Spleen (tissue), 13 donors: ENCODE measurements at regions of chr11 and their contacts with region 1.

Region 1: GRCh38 chr11:65506770-65507505 is 8.1 kb downstream of the MALAT1 start:
- DNase-seq: no peak
- H3K4me3 ChIP-seq: peak overlapping the region in 6 of 8 donors; percentile 13 to 92 (median 76)
- H3K27ac ChIP-seq: peak overlapping the region; percentile 63 to 100 (median 98)
- H3K4me1 ChIP-seq: peaks cover 40 to 92% (median 58%) of the 10 kb centered on the region in 6 donors
- H3K27me3 ChIP-seq: no peaks in the 10 kb centered on the region
- CTCF ChIP-seq: no peak
- POLR2A ChIP-seq: peak in 2 of 3 donors; percentile 0 to 66

Region 2: GRCh38 chr11:65373839-65374580 is 132.9 kb before region 1 on chr11:
- intact Hi-C with region 1: loop called (anchors 5 kb)
- DNase-seq: no peak
- H3K4me3 ChIP-seq: no peak overlapping the region
- H3K27ac ChIP-seq: no peak overlapping the region
- H3K4me1 ChIP-seq: peaks cover 0 to 23% (median 16%) of the 10 kb centered on the region in 6 donors
- H3K27me3 ChIP-seq: no peaks in the 10 kb centered on the region
- CTCF ChIP-seq: no peak
- POLR2A ChIP-seq: no peak

Region 3: DNA sequence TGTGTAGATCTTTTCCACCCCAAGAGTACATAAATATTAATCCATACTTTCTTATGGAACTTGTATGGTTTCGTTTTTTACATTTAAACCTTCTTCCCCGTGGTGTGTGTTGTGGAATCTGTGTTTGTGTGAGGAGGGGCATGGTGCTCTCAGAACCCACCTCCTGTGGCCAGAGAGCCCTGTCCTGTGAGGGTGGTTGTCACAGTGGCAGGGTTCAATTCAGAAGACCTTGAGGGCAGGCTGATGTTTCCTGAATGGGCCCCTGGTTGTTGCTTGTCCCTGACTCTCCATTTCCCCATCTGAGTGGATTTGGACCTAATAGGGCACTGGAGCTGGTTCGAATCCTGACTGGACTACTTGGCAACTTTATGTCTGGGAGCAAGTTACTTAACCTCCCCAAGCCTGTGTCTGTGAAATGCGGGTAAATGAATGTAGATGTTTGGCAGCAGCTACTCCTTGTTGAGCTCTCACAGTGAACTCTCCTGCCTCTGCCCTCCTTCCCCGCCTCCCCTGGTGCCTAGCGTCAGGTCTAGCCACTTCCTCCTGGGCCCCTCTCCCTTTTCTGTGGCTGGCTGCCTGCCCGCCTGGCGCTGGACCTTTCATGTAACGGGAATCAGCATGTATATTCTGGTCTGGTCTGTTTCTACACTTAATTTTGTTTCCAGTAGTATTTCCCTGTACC is 77.1 kb before region 1 on chr11:
- intact Hi-C with region 1: loop called (anchors 5 kb)
- DNase-seq: peak; percentile 91
- H3K4me3 ChIP-seq: peak overlapping the region; percentile 0 to 96 (median 82)
- H3K27ac ChIP-seq: peak overlapping the region; percentile 92 to 100 (median 98)
- H3K4me1 ChIP-seq: peaks cover 64 to 94% (median 86%) of the 10 kb centered on the region in 6 donors
- H3K27me3 ChIP-seq: no peaks in the 10 kb centered on the region
- CTCF ChIP-seq: no peak
- POLR2A ChIP-seq: peak; percentile 3 to 57 (median 40)

Region 4: DNA sequence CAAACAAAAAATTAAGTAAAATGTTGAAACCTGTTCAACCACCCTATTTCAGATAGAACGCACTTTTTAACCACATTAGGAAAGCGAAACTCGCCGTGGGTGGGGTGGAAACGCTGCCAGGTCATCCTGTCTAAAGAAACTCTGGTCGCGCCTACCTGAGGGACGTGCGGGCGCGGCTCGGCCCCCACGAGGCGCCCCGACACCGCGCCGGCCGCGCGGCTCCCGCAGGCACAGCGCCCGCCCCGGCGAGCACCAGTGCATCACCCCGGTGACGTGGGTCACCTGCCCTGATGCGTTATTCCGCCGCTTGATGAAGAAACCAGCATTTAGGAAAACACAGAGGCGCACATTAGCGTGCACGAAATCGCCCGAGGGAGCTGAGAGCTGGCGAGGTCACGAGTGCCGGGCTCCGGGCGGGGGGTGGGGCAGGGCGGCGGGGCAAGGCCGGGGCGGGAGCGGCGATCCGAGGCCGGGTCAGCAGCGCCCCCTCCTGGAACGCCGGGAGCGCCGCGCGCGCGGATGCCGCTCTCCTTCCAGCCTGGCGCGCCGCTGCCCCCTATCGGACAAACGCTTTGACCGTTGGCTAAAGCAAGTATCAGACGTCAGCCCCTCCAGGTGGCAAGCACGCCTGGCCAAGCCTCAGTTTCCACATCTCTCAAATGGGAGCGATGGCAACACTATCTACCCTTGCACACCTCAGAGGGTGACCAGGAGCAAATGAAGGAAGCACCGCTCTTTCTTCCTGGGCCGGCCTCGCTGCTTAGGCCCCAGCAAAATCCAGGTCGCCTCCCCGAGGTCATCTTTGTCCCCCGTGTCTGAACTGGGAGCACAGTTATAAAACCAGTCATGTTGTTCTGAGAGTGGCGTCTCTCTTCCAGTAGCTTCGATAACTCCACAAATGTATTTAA is 311.2 kb after region 1 on chr11:
- intact Hi-C with region 1: no loop called
- DNase-seq: peak; percentile 99
- H3K4me3 ChIP-seq: peak overlapping the region; percentile 43 to 91 (median 66)
- H3K27ac ChIP-seq: peak overlapping the region; percentile 69 to 91 (median 85)
- H3K4me1 ChIP-seq: peaks cover 4 to 31% (median 21%) of the 10 kb centered on the region in 6 donors
- H3K27me3 ChIP-seq: no peaks in the 10 kb centered on the region
- CTCF ChIP-seq: peak; percentile 89 to 100 (median 100)
- POLR2A ChIP-seq: no peak